Activated CD4-positive, alpha-beta T cell treated with anti-CD3 and anti-CD28 coated beads, Interleukin-2, amount 10 ng/mL, durations not matched to agents 24 days and 14 days (primary cell): ENCODE measurements at regions of chr19 and their contacts with region 1.

Region 1: GRCh38 chr19:42244347-42245220 is 2.2 kb upstream of the GSK3A start:
- DNase-seq: peak; percentile 97
- H3K4me3 Mint-ChIP-seq: peak overlapping the region; percentile 90
- H3K27ac Mint-ChIP-seq: peak overlapping the region; percentile 93
- H3K4me1 Mint-ChIP-seq: peaks cover 31% of the 10 kb centered on the region
- H3K27me3 Mint-ChIP-seq: no peaks in the 10 kb centered on the region

Region 2: GRCh38 chr19:42121656-42122069 is 122.9 kb before region 1 on chr19:
- intact Hi-C with region 1: loop called (anchors 2 kb)
- DNase-seq: peak; percentile 92
- H3K4me3 Mint-ChIP-seq: peak overlapping the region; percentile 80
- H3K27ac Mint-ChIP-seq: peak overlapping the region; percentile 95
- H3K4me1 Mint-ChIP-seq: peaks cover 52% of the 10 kb centered on the region
- H3K27me3 Mint-ChIP-seq: no peaks in the 10 kb centered on the region

Region 3: DNA sequence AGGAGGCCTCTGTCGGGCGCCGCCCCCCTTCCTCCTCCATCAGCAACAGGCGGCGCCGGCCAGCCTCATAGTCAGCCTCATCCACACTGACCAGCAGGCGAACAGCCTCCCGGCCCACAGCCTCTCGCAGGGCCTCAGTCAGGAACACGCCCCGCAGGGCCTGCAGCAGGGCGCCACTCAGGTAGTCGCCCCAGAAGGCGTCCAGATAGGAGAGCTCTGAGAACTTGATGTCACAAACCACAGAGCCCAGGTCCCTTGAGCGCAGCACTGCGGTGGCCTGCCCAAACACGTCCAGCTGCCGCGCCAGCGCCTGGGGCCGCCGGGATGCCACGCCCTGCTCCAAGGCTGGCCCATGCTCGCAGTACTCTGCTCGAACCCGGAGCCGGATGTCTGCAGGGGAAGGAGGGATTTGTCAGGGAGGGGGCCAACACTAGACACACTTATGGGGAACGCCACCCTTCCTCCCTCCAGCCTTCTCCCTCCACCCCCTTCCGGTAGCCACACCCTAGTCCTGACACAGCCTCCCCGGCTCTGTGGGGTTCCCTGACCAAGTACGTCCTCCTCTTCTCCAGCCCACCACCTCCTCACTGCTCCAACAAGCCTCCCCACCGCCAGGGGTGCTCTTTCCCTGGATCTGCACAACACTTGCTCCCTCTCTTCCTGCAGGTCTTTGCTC is 45.0 kb before region 1 on chr19:
- intact Hi-C with region 1: no loop called
- DNase-seq: peak; percentile 93
- H3K4me3 Mint-ChIP-seq: peak overlapping the region; percentile 80
- H3K27ac Mint-ChIP-seq: peak overlapping the region; percentile 87
- H3K4me1 Mint-ChIP-seq: peaks cover 76% of the 10 kb centered on the region
- H3K27me3 Mint-ChIP-seq: no peaks in the 10 kb centered on the region

Region 4: GRCh38 chr19:42219812-42220750 is 24.5 kb before region 1 on chr19 and contains the start of gene ZNF526:
- intact Hi-C with region 1: loop called (anchors 1 kb)
- DNase-seq: peak; percentile 100
- H3K4me3 Mint-ChIP-seq: peak within 1 kb of the TSS; percentile 96
- H3K27ac Mint-ChIP-seq: peak within 1 kb of the TSS; percentile 94
- H3K4me1 Mint-ChIP-seq: peaks cover 50% of the 10 kb centered on the region
- H3K27me3 Mint-ChIP-seq: peaks cover 2% of the 10 kb centered on the region
- total RNA-seq, gene ZNF526: 19.0 and 20.1 TPM in 2 replicates

Region 5: DNA sequence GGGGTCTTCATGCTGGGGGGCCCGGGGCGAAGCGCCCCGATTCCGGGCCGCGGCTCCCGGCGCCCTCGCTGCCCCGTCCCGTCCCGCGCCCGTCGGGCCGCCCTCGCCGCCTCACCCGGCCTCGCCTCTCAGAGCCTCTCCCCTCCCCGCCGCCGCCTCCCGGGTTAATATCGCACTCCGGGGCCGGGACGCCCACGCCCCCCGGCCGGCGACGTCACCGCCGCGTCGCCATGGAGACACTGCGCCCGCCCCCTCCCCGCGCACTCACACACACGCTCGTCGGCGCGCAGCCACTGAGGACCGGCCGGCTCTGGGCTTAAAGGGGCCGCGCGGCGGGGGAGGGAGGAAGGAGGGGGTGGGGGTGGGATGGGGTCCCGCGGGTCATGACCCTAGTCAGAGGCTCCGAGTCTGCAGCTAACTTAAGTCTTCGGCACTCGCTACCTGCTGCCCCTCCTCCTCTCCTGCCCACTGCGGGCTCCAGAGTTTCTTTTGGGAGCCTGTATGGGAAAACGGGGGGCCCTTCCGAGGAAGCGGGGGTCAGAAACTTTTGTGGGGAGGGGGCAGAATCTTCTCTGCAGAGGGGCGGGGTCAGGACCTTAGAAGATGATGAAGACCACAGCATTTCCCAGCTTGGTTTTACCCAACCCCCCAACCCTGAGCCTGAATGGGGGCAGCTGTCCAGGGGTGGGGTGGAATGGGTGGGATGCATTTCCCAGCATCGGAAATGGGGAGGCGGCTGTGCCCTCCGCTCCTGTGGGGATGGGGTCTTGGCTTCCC is 10.6 kb after region 1 on chr19 and contains the start of gene ERF:
- intact Hi-C with region 1: loop called (anchors 1 kb)
- DNase-seq: peak; percentile 98
- H3K4me3 Mint-ChIP-seq: peak within 1 kb of the TSS; percentile 78
- H3K27ac Mint-ChIP-seq: peak within 1 kb of the TSS; percentile 81
- H3K4me1 Mint-ChIP-seq: peaks cover 19% of the 10 kb centered on the region
- H3K27me3 Mint-ChIP-seq: peaks cover 10% of the 10 kb centered on the region
- total RNA-seq, gene ERF: 71.6 and 82.3 TPM in 2 replicates

Region 6: GRCh38 chr19:42268704-42269477 is 24.3 kb after region 1 on chr19 and contains the start of gene CIC:
- intact Hi-C with region 1: loop called (anchors 1 kb)
- DNase-seq: peak; percentile 100
- H3K4me3 Mint-ChIP-seq: no peak within 1 kb of the TSS
- H3K27ac Mint-ChIP-seq: peak within 1 kb of the TSS; percentile 99
- H3K4me1 Mint-ChIP-seq: peaks cover 30% of the 10 kb centered on the region
- H3K27me3 Mint-ChIP-seq: no peaks in the 10 kb centered on the region
- total RNA-seq, gene CIC: 61.2 and 65.6 TPM in 2 replicates

Region 7: DNA sequence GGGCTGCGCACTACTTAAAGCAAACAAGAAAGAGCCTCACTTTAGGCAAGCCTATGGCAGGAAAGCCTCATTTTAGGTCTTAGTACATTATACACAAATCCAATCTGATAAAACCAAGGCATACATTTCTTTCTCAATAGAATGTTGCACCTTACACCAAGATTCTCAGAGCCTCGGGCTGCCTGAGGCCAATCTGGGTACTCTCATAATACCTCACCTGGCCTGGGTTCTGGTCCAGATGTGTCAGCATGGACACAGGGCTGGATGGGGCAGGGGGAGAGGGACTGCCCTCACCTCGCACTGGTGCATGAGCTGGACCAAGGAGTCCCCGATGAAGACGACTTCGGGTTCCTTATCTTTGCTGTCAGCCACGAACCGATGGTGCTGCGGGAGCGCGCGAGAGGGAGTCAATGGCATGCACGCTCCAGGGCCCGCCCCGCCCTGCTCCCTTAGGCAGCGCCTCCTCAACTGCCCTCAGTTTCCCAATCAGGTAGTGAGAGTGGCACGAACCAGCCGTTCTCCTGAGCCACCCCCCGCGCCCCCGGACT is 57.1 kb after region 1 on chr19 and contains the start of gene PRR19:
- intact Hi-C with region 1: loop called (anchors 1 kb)
- DNase-seq: no peak
- H3K4me3 Mint-ChIP-seq: peak within 1 kb of the TSS; percentile 92
- H3K27ac Mint-ChIP-seq: peak within 1 kb of the TSS; percentile 90
- H3K4me1 Mint-ChIP-seq: peaks cover 21% of the 10 kb centered on the region
- H3K27me3 Mint-ChIP-seq: no peaks in the 10 kb centered on the region
- total RNA-seq, gene PRR19: 1.3 and 1.6 TPM in 2 replicates

Region 8: GRCh38 chr19:42325273-42325895 is 80.8 kb after region 1 on chr19 and contains the start of gene MEGF8:
- intact Hi-C with region 1: loop called (anchors 1 kb)
- DNase-seq: peak; percentile 100
- H3K4me3 Mint-ChIP-seq: peak within 1 kb of the TSS; percentile 93
- H3K27ac Mint-ChIP-seq: peak within 1 kb of the TSS; percentile 87
- H3K4me1 Mint-ChIP-seq: peaks cover 16% of the 10 kb centered on the region
- H3K27me3 Mint-ChIP-seq: peaks cover 30% of the 10 kb centered on the region
- total RNA-seq, gene MEGF8: 8.4 and 9.1 TPM in 2 replicates

Region 9: GRCh38 chr19:42423462-42424344 is 179.1 kb after region 1 on chr19:
- intact Hi-C with region 1: no loop called
- DNase-seq: peak; percentile 98
- H3K4me3 Mint-ChIP-seq: peak overlapping the region; percentile 91
- H3K27ac Mint-ChIP-seq: peak overlapping the region; percentile 91
- H3K4me1 Mint-ChIP-seq: peaks cover 36% of the 10 kb centered on the region
- H3K27me3 Mint-ChIP-seq: no peaks in the 10 kb centered on the region